Heart left ventricle (tissue), 16 donors: ENCODE measurements at regions of chr11 and their contacts with region 1.

Region 1: DNA sequence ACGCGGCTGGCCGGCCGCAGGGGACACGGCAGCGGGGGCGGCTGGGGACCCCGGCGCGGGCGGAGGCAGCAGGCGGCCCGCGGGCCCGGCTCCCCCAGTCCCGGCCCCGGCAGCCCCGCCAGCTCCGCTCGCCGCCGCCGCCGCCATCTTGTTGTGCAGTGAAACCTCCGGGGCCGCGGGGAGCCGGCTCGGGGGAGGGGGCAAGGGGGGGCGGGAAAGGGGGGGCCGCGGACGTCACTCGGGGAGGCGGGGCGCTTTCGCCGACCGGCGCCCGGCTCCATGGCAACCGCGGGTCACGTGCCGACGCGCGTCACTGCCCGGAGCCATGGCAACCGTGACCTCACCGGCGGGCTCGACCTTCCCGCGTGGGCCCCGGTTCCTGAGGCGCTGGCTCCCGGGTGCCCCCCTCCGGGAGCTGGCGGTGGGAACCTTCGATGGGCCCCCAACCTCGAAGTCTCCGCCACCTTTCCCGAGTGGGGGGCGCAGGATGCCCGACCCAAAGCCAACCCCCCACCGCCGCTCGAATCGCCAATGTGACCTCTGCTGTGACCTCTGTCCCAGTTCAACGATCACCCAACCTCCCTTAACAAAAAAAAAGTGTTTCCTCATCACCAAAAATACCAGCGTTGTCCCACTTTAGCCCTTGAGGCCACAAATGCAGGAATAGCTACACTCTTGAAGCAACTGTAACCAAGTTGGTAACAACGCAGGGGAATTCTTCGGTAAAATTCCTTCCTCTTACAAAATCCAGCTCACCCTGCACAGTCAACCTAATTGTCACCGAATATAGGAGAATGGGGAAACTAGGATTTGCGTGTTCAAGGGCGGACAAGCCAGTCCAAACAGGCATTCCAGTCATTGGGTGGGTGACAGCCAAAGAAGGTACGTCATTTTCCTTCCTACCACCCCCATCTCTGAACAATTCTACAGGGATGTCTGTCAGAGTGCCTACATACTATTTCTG is at the start of gene SIK3:
- DNase-seq: peak; percentile 95 to 98 (median 97)
- ATAC-seq: peak; percentile 86 to 94 (median 92)
- H3K4me3 ChIP-seq: peak within 1 kb of the TSS; percentile 57 to 94 (median 84)
- H3K27ac ChIP-seq: peak within 1 kb of the TSS; percentile 95 to 99 (median 98)
- H3K4me1 ChIP-seq: peaks cover 0 to 53% (median 44%) of the 10 kb centered on the region in 12 donors
- H3K27me3 ChIP-seq: no peaks in the 10 kb centered on the region
- CTCF ChIP-seq: peak in 11 of 12 donors; percentile 24 to 74 (median 53)
- POLR2A ChIP-seq: peak in 1 of 2 donors; percentile 82
- total RNA-seq, gene SIK3: 25.7 to 67.4 (median 39.0) TPM

Region 2: DNA sequence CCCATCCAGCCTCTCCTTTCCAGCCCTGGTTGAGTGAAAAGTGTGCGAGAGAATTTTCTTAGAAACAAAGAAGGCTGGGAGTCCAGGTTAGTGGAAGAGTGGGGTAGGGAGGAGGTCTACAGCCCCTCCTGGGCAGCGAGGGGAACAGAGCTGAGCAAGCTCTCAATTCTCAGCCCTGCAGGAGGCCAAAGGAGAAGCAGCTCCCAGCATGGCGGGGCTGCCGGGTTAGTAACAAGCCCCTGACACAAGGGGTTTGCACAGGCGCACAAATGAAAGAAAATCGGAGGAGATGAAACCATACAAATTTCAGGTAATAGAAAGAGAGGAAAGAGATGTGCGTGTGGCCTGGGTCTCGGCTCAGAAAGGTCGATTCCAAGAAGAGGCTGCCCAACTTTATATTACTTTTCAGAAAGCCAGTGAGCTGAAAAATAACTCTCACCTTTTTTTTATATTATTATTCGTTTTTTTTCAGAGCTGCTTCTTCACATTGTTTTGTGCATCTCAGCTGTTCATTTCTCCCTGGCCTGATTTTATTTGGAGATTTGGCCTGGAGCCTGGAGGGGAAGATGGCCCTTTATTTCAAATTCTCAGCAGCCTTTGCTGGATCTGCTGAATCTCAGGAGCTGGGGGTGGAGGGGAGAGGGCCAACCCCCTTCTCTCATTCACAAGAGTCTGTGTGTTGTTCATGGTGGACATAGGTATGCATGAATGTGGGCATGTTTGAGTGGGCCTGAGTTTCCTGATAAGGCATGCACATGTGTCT is 909.0 kb before region 1 on chr11:
- intact Hi-C with region 1: no loop called
- DNase-seq: no peak
- ATAC-seq: no peak
- H3K4me3 ChIP-seq: no peak overlapping the region
- H3K27ac ChIP-seq: no peak overlapping the region
- H3K4me1 ChIP-seq: peaks cover 0 to 17% (median 5%) of the 10 kb centered on the region in 12 donors
- H3K27me3 ChIP-seq: peaks cover 0 to 16% (median 0%) of the 10 kb centered on the region in 9 donors
- CTCF ChIP-seq: no peak
- POLR2A ChIP-seq: no peak

Region 3: GRCh38 chr11:116787786-116788486 is 310.6 kb before region 1 on chr11 and contains the start of gene ZPR1:
- intact Hi-C with region 1: loop called in 2 of 10 experiments (anchors 2 kb)
- DNase-seq: peak; percentile 85 to 92 (median 88)
- ATAC-seq: peak; percentile 80 to 90 (median 88)
- H3K4me3 ChIP-seq: peak within 1 kb of the TSS; percentile 74 to 99 (median 96)
- H3K27ac ChIP-seq: peak within 1 kb of the TSS; percentile 61 to 93 (median 84)
- H3K4me1 ChIP-seq: peaks cover 0 to 31% (median 16%) of the 10 kb centered on the region in 12 donors
- H3K27me3 ChIP-seq: no peaks in the 10 kb centered on the region
- CTCF ChIP-seq: no peak
- POLR2A ChIP-seq: peak in 1 of 2 donors; percentile 66
- total RNA-seq, gene ZPR1: 9.7 to 48.7 (median 27.1) TPM

Region 4: DNA sequence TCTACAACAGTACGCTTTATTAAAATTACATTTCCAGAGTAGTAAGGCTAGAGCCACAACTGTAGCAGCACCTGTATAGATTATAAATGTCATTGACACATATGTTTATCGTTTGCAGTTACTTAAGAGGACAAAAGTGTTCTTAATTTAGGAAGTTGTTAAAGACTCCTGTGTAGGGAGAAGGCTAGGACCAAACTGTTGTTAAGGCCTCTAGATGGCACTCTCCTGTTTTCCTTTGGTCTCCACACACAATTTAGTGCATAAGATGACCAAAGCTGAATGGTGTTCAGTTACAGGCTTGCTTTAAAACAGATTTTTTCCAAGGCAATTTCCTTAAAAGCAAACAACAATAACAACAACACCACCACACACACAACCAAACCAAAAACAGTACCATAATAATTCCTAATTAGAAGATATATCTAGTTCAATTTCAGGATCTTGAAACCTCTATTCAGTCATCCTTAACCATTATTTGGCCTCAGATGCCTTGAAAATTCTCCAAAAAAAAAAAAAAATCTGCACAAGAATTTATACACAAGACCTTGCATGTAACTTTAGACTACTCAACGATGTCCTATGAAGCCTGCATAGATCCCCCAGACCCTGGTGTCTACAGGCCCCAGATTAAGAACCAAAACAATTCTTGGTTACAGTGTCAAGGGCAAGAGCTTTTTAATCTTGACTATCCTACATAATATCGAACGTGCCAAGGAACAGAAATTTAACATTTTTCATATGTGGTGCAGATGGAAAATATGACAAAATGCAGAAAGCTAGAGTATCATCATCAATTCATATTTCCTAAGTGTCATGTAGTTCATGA is 218.5 kb before region 1 on chr11:
- intact Hi-C with region 1: loop called in 4 of 10 experiments (anchors 2 to 5 kb)
- DNase-seq: no peak
- ATAC-seq: peak; percentile 67 to 90 (median 85)
- H3K4me3 ChIP-seq: no peak overlapping the region
- H3K27ac ChIP-seq: no peak overlapping the region
- H3K4me1 ChIP-seq: peaks cover 0 to 32% (median 2%) of the 10 kb centered on the region in 12 donors
- H3K27me3 ChIP-seq: no peaks in the 10 kb centered on the region
- CTCF ChIP-seq: peak; percentile 52 to 81 (median 66)
- POLR2A ChIP-seq: no peak

Region 5: DNA sequence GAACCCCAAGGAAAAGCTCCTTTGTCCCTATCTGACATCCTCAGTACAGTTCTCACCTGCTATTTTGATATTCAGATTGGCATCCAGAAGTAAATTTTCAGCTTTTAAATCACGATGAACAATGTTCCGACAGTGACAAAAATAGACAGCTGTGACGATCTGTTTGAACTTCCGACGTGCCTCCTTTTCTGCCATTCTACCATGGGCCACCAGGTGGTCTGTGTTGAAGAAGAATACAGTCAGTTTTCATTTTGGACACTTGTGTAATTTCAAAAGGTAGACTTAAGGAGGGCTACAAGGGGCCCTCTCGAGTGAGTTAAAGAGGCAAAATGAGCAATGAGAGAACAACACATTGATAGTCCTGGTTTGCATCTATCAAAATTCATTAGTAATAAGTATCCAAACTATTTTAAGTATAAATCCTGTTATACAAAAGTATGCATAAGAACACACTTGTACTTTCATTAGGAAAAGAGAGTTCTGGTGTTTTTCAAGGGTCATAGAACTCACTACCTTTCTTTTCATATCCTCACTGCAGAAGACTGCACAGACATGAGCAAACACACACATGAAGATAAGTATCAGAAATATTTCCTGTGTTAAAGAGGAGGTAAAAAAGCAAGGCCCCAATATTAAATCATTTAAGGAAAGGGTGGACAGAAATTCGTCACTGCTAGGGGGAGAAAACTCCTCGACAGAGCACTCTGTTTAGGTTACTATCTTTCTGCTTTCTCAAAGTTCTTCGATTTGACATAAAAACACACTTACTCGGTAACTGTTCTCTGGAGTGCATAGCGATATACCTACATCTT is 171.2 kb before region 1 on chr11:
- intact Hi-C with region 1: loop called in 2 of 10 experiments (anchors 5 kb)
- DNase-seq: no peak
- ATAC-seq: no peak
- H3K4me3 ChIP-seq: no peak overlapping the region
- H3K27ac ChIP-seq: peak overlapping the region in 1 of 12 donors; percentile 82
- H3K4me1 ChIP-seq: peaks cover 12 to 82% (median 48%) of the 10 kb centered on the region in 12 donors
- H3K27me3 ChIP-seq: no peaks in the 10 kb centered on the region
- CTCF ChIP-seq: peak in 11 of 12 donors; percentile 11 to 43 (median 27)
- POLR2A ChIP-seq: no peak

Region 6: GRCh38 chr11:117010808-117011540 is 87.6 kb before region 1 on chr11:
- intact Hi-C with region 1: no loop called
- DNase-seq: no peak
- ATAC-seq: no peak
- H3K4me3 ChIP-seq: no peak overlapping the region
- H3K27ac ChIP-seq: no peak overlapping the region
- H3K4me1 ChIP-seq: peaks cover 0 to 30% (median 3%) of the 10 kb centered on the region in 12 donors
- H3K27me3 ChIP-seq: no peaks in the 10 kb centered on the region
- CTCF ChIP-seq: no peak
- POLR2A ChIP-seq: no peak

Region 7: GRCh38 chr11:117026593-117027330 is 71.8 kb before region 1 on chr11:
- intact Hi-C with region 1: loop called in 1 of 10 experiments (anchors 10 kb)
- DNase-seq: no peak
- ATAC-seq: peak in 2 of 4 donors; percentile 33 to 54
- H3K4me3 ChIP-seq: no peak overlapping the region
- H3K27ac ChIP-seq: no peak overlapping the region
- H3K4me1 ChIP-seq: peaks cover 0 to 50% (median 15%) of the 10 kb centered on the region in 12 donors
- H3K27me3 ChIP-seq: no peaks in the 10 kb centered on the region
- CTCF ChIP-seq: no peak
- POLR2A ChIP-seq: no peak

Region 8: GRCh38 chr11:117807482-117808327 is 709.2 kb after region 1 on chr11:
- intact Hi-C with region 1: no loop called
- DNase-seq: peak; percentile 70 to 89 (median 79)
- ATAC-seq: peak; percentile 31 to 59 (median 45)
- H3K4me3 ChIP-seq: no peak overlapping the region
- H3K27ac ChIP-seq: no peak overlapping the region
- H3K4me1 ChIP-seq: peaks cover 0 to 23% (median 3%) of the 10 kb centered on the region in 12 donors
- H3K27me3 ChIP-seq: peaks cover 0 to 12% (median 0%) of the 10 kb centered on the region in 9 donors
- CTCF ChIP-seq: peak; percentile 84 to 96 (median 89)
- POLR2A ChIP-seq: no peak